Astrocyte of the cerebellum (primary cell): ENCODE measurements at regions of chr17 and their contacts with region 1.

Region 1: DNA sequence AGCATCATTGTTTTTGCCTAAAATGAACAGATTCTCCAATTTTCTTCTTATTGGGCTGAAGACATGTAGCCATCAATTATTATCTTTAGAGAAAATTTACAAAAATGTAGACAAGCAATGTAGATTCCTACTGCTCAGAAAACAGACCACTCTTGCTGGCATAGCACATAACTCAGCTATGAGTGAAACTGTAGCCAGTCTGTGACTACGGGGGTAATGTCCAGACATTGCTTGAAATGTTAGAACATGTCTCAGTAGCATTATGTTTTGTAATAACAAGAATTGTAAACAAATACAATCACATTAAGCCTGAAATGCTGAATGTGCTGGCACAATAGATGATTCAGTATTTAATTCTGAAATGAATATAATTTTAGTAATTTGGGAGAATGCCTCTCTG is 265.7 kb upstream of the KCNJ16 start:
- DNase-seq: no peak
- H3K4me3 ChIP-seq: no peak overlapping the region
- CTCF ChIP-seq: no peak

Region 2: GRCh38 chr17:69773081-69773480 is 36.2 kb before region 1 on chr17:
- in situ Hi-C with region 1: loop called (anchors 5 kb)
- DNase-seq: no peak
- H3K4me3 ChIP-seq: no peak overlapping the region
- CTCF ChIP-seq: no peak